Calu3 (cell line): ENCODE measurements at regions of chr1 and their contacts with region 1.

Region 1: DNA sequence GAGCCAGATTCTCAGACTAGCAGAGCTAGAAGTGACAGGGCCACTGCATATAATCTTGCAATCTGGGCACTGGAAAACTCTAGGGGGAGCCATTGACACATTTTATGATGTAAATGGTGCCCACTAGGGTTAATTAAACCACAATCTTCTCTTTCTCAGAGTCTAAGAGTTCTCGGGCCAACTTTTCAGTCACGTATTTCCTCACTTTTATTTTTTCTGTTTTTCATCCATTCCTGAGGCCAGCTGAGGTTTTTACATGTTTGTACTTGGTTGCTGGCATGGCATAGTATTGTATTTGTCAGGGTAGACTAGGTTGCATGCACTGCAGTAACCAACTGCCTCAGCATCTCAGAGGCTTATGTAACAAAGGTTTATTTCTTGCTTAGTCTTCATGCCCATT is 138.2 kb downstream of the ZNF326 start:
- DNase-seq: peak; percentile 50
- H3K4me3 Mint-ChIP-seq: no peak overlapping the region
- H3K27ac Mint-ChIP-seq: no peak overlapping the region
- H3K4me1 Mint-ChIP-seq: no peaks in the 10 kb centered on the region
- H3K27me3 Mint-ChIP-seq: peaks cover 38% of the 10 kb centered on the region
- CTCF ChIP-seq: peak; percentile 51

Region 2: GRCh38 chr1:90291431-90292216 is 158.5 kb after region 1 on chr1:
- CTCF ChIA-PET with region 1: no interaction called
- intact Hi-C with region 1: loop called (anchors 10 kb)
- DNase-seq: no peak
- H3K4me3 Mint-ChIP-seq: no peak overlapping the region
- H3K27ac Mint-ChIP-seq: no peak overlapping the region
- H3K4me1 Mint-ChIP-seq: no peaks in the 10 kb centered on the region
- H3K27me3 Mint-ChIP-seq: peaks cover 48% of the 10 kb centered on the region
- CTCF ChIP-seq: no peak

Region 3: GRCh38 chr1:90579212-90579802 is 446.2 kb after region 1 on chr1:
- CTCF ChIA-PET with region 1: interaction called, 4 read pairs
- intact Hi-C with region 1: loop called (anchors 10 kb)
- DNase-seq: no peak
- H3K4me3 Mint-ChIP-seq: no peak overlapping the region
- H3K27ac Mint-ChIP-seq: no peak overlapping the region
- H3K4me1 Mint-ChIP-seq: no peaks in the 10 kb centered on the region
- H3K27me3 Mint-ChIP-seq: peaks cover 30% of the 10 kb centered on the region
- CTCF ChIP-seq: peak; percentile 35

Region 4: DNA sequence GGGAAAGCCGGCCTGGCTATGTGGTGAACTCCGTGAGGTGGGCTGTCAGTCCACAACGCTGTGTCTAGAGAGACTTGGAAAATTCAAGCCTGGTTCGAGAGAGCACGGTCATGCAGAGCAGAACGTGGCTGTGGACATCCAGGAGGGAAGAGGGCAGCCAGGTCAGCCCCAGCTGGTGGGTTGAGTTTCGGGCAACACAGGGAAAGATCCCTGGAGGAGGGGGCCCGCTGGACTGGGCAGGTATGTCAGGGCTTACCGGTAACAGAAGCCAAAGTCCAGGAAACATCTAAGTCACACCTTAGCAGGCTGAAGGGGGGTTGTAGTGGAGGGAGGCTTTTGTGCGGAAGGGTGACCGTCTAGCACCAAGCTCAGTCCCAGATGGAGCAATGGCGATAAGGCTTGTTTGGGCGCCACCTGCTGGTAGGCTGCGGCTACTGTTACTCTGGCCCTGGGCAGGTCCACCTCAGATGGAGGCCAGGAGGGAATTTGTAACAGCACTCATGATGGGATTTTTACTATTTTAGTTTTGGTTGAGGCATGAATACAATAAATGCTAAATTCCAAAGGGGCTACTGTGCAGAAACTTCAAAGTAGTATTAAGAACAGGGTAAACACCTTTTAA is 1032.0 kb after region 1 on chr1:
- CTCF ChIA-PET with region 1: no interaction called
- intact Hi-C with region 1: no loop called
- DNase-seq: peak; percentile 89
- H3K4me3 Mint-ChIP-seq: no peak overlapping the region
- H3K27ac Mint-ChIP-seq: peak overlapping the region; percentile 13
- H3K4me1 Mint-ChIP-seq: peaks cover 15% of the 10 kb centered on the region
- H3K27me3 Mint-ChIP-seq: no peaks in the 10 kb centered on the region
- CTCF ChIP-seq: peak; percentile 91